ENCODE measurements at regions of chr3 and their contacts with region 1.

Region 1: DNA sequence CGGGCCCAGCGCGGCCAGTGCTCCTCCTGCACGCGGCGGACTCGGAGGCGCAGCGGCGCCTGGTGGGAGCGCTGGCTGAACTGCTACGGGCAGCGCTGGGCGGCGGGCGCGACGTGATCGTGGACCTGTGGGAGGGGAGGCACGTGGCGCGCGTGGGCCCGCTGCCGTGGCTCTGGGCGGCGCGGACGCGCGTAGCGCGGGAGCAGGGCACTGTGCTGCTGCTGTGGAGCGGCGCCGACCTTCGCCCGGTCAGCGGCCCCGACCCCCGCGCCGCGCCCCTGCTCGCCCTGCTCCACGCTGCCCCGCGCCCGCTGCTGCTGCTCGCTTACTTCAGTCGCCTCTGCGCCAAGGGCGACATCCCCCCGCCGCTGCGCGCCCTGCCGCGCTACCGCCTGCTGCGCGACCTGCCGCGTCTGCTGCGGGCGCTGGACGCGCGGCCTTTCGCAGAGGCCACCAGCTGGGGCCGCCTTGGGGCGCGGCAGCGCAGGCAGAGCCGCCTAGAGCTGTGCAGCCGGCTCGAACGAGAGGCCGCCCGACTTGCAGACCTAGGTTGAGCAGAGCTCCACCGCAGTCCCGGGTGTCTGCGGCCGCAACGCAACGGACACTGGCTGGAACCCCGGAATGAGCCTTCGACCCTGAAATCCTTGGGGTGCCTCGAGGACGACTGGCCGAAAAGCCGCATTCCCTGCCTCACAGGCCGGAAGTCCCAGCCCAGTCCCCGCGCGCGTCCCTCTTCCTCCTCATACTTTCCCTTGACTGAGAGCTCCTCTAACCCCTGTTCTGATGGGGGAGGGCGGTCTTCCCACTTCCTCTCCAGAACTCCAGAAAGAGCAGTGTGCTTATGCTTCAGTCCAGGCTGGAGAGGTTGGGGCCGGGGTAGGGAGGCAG is 1.4 kb upstream of the IL17RC start:
- DNase-seq: peak; percentile 78
- ATAC-seq: peak; percentile 21
- H3K4me3 ChIP-seq: peak overlapping the region; percentile 74
- H3K27ac ChIP-seq: peak overlapping the region; percentile 99
- H3K4me1 ChIP-seq: peaks cover 67% of the 10 kb centered on the region
- H3K27me3 ChIP-seq: no peaks in the 10 kb centered on the region
- CTCF ChIP-seq: peak; percentile 5; the same call in 1 of the 2 replicates

Region 2: DNA sequence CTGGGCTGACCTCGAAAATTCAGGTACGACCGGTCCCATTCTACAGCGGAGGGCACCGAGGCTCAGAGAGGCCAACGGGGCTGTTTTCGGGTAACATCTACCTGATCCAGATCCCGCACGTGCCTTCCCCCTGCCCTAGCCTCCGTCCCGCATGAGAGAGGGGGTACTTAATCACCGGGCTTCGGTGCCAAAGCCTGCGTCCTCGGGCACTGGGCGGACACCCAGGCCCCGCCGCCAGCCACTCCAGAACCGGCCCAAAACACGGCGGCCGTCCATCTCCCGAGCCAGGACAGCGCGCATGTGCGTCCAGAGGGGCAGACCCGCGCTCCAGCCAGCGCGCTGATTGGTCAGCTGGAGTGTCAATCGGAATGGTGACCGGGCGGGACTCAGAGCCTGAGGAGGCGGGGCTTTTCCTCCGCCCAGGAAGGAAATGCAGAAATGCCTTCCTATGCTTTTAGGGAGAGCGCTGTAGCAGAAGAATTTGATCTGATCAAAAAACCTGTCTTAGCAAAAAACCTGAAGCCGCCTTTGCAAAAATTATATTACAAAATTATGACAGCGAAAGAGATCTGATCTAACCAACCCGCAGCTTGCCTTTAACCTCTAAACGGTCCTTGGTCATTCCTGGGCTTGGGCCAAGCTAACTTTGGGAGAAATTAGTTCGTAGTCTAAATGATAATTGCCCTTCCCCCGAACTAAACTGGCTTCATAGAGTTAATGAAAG is 71.6 kb before region 1 on chr3 and contains the start of gene RPUSD3:
- CTCF ChIA-PET with region 1: interaction called, 9 read pairs
- POLR2A ChIA-PET with region 1: no interaction called
- intact Hi-C with region 1: loop called (anchors 1 kb)
- DNase-seq: peak; percentile 99
- ATAC-seq: peak; percentile 96
- H3K4me3 ChIP-seq: peak within 1 kb of the TSS; percentile 90
- H3K27ac ChIP-seq: peak within 1 kb of the TSS; percentile 62
- H3K4me1 ChIP-seq: peaks cover 19% of the 10 kb centered on the region
- H3K27me3 ChIP-seq: no peaks in the 10 kb centered on the region
- CTCF ChIP-seq: no peak
- total RNA-seq, gene RPUSD3: 54.1 and 76.1 TPM in 2 replicates

Region 3: DNA sequence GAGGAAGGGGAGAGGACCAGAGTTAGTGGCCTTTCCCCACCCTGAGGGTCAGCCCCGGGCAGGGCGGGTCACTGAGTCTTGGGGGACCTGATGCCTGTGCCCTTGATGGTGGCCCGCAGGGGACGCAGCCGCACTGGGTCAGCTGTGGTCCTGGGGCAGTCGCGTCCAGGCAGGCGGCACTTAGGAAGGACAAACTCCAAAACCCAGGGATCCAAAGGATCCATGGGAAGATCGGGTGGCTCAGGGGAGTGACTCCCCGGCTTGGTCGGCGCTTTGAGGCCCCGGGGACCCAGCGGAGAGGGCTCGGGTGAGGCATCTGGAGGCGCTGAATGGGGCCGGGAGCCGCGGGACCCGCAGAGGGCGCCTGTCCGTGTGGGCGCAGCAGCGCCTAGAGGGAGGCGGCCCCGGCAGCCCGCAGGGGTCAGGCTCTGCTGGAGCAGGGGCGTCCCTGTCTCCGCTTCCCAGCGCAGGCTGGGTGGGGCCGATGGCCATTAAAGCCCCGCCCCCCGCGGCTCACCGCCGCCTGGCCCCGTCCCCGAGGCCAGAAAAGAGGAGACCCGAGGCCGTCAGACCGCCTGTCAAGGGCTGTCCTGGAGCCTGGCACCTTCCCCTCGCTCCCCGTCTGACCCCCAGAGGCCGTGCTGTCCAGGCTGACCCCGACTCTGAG is 53.0 kb before region 1 on chr3:
- CTCF ChIA-PET with region 1: no interaction called
- POLR2A ChIA-PET with region 1: no interaction called
- intact Hi-C with region 1: loop called (anchors 5 kb)
- DNase-seq: peak; percentile 48
- ATAC-seq: peak; percentile 88
- H3K4me3 ChIP-seq: peak overlapping the region; percentile 50; the same call in 1 of the 2 replicates
- H3K27ac ChIP-seq: no peak overlapping the region
- H3K4me1 ChIP-seq: 0 out of 2 replicates have a peak, but pooled peaks cover 9% of the 10 kb centered on the region
- H3K27me3 ChIP-seq: no peaks in the 10 kb centered on the region
- CTCF ChIP-seq: peak; percentile 48

Region 4: DNA sequence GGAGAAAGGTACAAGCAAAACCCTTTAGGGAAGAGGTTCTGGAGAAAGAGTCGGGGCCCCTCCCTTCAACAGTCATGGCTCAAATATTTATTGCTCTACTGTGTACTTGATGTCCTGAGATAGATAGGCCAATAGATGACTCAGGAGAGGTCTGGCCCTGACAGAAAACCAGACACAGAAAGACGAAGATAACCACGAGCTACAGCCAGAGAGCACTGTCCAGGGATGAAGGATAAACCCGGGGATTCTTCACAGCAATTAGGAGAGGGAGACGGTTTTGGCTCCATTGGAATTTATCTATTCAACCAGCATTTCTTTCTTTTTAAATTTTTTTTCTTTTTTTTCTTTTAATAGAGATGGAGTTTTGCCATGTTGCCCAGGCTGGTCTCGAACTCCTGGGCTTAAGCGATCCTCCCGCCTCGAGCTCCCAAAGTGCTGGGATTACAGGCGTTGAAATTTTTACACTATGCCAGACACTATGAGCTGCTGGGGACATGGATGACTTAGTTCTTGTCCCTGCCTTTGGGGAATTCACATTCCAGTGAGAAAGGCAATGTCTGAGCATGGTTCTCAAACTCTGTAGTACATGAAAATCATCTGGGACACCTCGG is 30.8 kb before region 1 on chr3:
- CTCF ChIA-PET with region 1: no interaction called
- POLR2A ChIA-PET with region 1: interaction called, 3 read pairs
- intact Hi-C with region 1: loop called (anchors 5 kb)
- DNase-seq: peak; percentile 96
- ATAC-seq: peak; percentile 98
- H3K4me3 ChIP-seq: no peak overlapping the region
- H3K27ac ChIP-seq: peak overlapping the region; percentile 72
- H3K4me1 ChIP-seq: peaks cover 15% of the 10 kb centered on the region
- H3K27me3 ChIP-seq: no peaks in the 10 kb centered on the region
- CTCF ChIP-seq: no peak

Region 5: DNA sequence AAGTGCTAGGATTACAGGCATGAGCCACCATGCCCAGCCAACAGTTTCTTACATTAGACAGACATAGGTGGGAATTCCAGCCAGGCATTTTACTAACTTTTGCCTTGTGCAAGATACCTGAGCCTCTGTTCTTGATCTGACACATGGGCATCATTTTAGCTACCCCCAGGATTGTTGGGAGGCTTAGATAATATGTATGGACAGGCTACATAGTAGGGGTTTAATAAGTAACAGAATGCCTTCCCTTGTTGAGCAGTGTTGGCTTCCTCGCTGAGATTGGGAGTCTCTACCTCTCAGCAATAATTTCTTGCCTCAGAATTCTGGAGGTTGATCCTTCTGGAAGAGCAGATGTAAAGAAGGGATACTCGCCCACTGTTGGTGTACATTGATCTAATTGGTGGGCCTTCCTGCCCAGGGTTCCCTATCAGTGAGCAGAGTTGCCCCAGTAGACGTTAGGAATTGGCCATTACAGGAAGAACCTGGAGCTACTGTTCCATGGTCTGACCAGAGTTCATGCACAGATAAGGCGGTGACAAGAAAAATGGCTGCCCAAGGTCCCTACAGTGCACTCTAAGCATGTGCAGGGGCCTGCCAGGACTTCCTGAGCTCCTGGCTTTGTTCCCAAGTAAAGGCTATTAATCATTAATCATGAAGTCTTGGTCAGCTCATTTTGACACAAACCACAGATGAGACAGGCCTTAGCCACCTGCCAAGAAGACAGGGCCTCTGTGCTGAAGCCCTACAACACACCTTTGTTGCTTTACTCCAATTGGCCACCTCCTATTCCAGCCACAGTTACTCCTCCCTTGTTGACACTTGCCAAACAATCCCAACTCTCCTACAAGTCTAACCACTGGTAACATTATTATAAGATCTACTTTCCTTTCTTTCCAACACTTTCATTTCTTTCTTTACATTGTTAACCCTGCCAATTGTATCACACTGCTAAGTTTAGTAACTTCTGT is 17.8 kb before region 1 on chr3:
- CTCF ChIA-PET with region 1: interaction called, 12 read pairs
- POLR2A ChIA-PET with region 1: interaction called, 28 read pairs
- intact Hi-C with region 1: loop called (anchors 1 kb)
- DNase-seq: peak; percentile 99
- ATAC-seq: peak; percentile 85
- H3K4me3 ChIP-seq: peak overlapping the region; percentile 46
- H3K27ac ChIP-seq: peak overlapping the region; percentile 93
- H3K4me1 ChIP-seq: peaks cover 57% of the 10 kb centered on the region
- H3K27me3 ChIP-seq: no peaks in the 10 kb centered on the region
- CTCF ChIP-seq: no peak

Region 6: GRCh38 chr3:9932843-9933560 is 17.5 kb after region 1 on chr3:
- CTCF ChIA-PET with region 1: interaction called, 3 read pairs
- POLR2A ChIA-PET with region 1: interaction called, 25 read pairs
- intact Hi-C with region 1: loop called (anchors 1 kb)
- DNase-seq: peak; percentile 84
- ATAC-seq: peak; percentile 71
- H3K4me3 ChIP-seq: peak overlapping the region; percentile 72
- H3K27ac ChIP-seq: peak overlapping the region; percentile 84
- H3K4me1 ChIP-seq: peaks cover 33% of the 10 kb centered on the region
- H3K27me3 ChIP-seq: no peaks in the 10 kb centered on the region
- CTCF ChIP-seq: peak; percentile 84

Region 7: DNA sequence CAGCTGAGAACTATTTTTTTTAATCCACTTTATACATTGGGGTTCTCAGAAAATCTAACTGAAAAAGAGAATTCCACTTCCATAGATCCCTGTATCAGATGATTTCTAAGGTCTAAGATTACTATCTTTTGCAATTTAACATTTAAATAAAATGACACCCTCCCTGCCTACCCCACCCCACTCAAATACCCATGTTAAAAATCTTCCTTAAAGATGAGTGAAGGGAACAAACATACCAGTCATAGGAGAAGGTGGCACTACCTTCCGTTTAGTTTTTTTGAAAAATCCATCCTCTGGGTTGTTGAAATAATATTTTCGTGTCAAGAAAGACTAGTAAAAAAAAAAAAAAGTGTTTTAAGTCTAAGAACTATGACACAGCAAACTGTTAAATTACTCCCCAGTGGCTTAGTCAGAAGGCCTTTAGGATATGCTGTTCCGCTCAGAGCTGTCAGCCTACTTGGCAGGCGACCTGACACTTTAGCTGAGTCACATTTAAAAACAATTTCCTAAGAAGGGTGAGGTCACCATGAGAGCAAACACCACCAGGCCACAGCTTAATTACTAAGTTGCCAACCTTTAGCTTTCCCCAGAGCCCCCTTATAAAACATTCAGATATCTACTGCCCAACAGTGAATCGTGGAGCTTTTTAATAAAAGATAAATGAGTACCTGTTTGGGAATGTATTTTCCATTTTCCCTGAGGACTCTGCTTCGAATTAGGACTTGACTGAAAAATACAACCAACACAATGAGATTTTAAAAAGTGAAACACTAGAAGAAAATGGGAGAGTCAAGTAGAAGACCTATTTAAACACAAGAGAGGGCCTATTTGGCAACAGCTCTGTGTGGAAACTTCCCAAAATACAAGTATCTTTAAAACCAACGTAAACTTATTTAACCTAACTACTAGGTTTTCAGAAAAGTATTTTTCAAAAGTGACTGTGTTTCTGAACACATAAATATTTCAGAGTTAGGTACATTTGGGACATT is 61.5 kb after region 1 on chr3:
- CTCF ChIA-PET with region 1: no interaction called
- POLR2A ChIA-PET with region 1: no interaction called
- intact Hi-C with region 1: loop called (anchors 2 kb)
- DNase-seq: peak; percentile 98
- ATAC-seq: peak; percentile 96
- H3K4me3 ChIP-seq: peak overlapping the region; percentile 36
- H3K27ac ChIP-seq: peak overlapping the region; percentile 93
- H3K4me1 ChIP-seq: peaks cover 20% of the 10 kb centered on the region
- H3K27me3 ChIP-seq: no peaks in the 10 kb centered on the region
- CTCF ChIP-seq: no peak

Measured in PC-3 (cell line).